Sciatic nerve (tissue), 2 donors: ENCODE measurements at regions of chr3 and their contacts with region 1.

Region 1: GRCh38 chr3:149273096-149273751 is 51.6 kb upstream of the CP start:
- DNase-seq: no peak
- ATAC-seq: peak; percentile 88

Region 2: GRCh38 chr3:148955544-148956346 is 317.5 kb before region 1 on chr3:
- intact Hi-C with region 1: loop called (anchors 10 kb)
- DNase-seq: peak; percentile 63
- ATAC-seq: peak; percentile 96

Region 3: GRCh38 chr3:149115114-149115513 is 158.1 kb before region 1 on chr3:
- intact Hi-C with region 1: loop called (anchors 5 kb)
- DNase-seq: no peak
- ATAC-seq: no peak